ENCODE measurements at regions of chr3 and their contacts with region 1.

Region 1: GRCh38 chr3:8441969-8442559 is 59.6 kb upstream of the LMCD1 start:
- DNase-seq: peak; percentile 12
- ATAC-seq: no peak
- H3K4me3 ChIP-seq: no peak overlapping the region
- H3K4me3 Mint-ChIP-seq: no peak overlapping the region
- H3K27ac ChIP-seq: no peak overlapping the region
- H3K27ac Mint-ChIP-seq: no peak overlapping the region
- H3K4me1 ChIP-seq: no peaks in the 10 kb centered on the region
- H3K4me1 Mint-ChIP-seq: no peaks in the 10 kb centered on the region
- H3K27me3 ChIP-seq: no peaks in the 10 kb centered on the region
- H3K27me3 Mint-ChIP-seq: peaks cover 3% of the 10 kb centered on the region
- CTCF ChIP-seq: peak; percentile 26

Region 2: DNA sequence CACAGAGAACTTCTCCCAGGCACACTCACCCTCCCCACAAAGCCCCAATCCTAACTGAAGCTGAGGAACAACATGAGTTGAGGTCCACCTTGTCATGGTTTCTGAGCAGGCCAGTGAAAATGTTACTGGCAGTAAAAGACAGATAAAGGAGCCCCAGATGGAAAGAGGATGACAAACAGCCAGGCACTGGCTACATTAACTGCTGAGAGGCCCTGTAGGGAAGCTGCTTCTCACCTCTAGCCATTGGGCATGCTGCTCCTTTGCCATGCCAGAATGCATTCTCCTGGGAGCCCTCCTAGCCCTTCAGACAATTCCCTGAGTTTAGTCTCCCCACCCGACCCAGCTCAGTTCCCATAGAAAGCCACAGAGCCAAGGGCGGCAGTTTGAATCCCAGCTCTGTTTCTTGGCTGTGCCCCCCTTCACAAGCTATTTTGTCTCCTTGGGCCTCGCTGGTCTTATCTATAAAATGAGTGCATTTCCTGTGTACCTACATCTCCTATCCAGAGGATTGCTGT is 120.1 kb after region 1 on chr3:
- CTCF ChIA-PET with region 1: no interaction called
- POLR2A ChIA-PET with region 1: no interaction called
- intact Hi-C with region 1: no loop called
- DNase-seq: no peak
- ATAC-seq: no peak
- H3K4me3 ChIP-seq: no peak overlapping the region
- H3K4me3 Mint-ChIP-seq: no peak overlapping the region
- H3K27ac ChIP-seq: no peak overlapping the region
- H3K27ac Mint-ChIP-seq: no peak overlapping the region
- H3K4me1 ChIP-seq: no peaks in the 10 kb centered on the region
- H3K4me1 Mint-ChIP-seq: no peaks in the 10 kb centered on the region
- H3K27me3 ChIP-seq: no peaks in the 10 kb centered on the region
- H3K27me3 Mint-ChIP-seq: no peaks in the 10 kb centered on the region
- CTCF ChIP-seq: no peak

Region 3: GRCh38 chr3:8622873-8623691 is 181.0 kb after region 1 on chr3:
- CTCF ChIA-PET with region 1: interaction called, 33 read pairs
- POLR2A ChIA-PET with region 1: no interaction called
- intact Hi-C with region 1: no loop called
- DNase-seq: peak; percentile 45
- ATAC-seq: peak; percentile 75
- H3K4me3 ChIP-seq: no peak overlapping the region
- H3K4me3 Mint-ChIP-seq: peak overlapping the region; percentile 37
- H3K27ac ChIP-seq: no peak overlapping the region
- H3K27ac Mint-ChIP-seq: no peak overlapping the region
- H3K4me1 ChIP-seq: peaks cover 0 to 4% of the 10 kb centered on the region in 2 donors
- H3K4me1 Mint-ChIP-seq: peaks cover 10% of the 10 kb centered on the region
- H3K27me3 ChIP-seq: peaks cover 0 to 7% (median 0%) of the 10 kb centered on the region in 4 experiments
- H3K27me3 Mint-ChIP-seq: no peaks in the 10 kb centered on the region
- CTCF ChIP-seq: peak; percentile 78